Posterior cingulate gyrus (tissue), 11 donors: ENCODE measurements at regions of chr7 and their contacts with region 1.

Region 1: DNA sequence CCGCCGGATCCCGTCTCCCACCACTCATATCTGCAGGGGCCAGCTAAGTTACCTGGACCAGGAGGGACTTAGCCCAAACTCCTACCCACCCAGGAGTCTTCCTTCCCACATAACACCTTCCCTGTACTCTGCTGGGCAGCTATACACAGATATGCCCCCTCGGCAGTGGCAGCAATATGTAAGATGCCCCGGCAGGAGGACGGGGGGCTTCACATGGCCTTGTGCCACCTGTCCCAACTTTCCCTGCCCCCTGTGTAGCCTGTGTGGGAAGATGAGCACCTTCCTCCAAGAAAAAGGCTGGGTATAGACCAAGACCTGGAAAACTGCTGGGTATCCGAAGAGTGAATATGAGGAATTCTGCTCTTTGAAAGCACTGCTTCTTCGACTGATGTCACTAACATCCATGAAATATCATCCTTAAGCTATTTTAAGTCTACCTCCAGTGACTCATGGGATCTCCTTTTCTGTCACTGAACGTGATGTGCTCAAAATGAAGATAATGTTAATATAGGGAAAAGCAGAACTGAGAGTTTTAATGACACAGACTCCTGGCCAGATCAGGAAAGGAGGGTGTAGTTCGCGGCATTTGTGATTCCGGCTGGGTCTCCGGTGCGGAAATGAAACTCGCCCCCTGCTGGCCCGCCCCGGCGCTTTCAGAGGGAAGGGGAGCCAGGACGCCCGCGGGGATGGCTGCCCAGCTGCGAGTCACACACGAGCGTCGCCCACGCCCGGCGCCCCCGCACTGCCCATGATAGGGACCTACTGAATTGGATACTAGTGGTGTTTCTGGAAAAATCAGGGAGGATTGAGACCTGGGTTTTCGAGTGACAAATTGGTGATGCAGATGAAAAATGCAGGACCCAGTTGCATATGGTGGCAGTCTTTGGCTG is 256.9 kb upstream of the NFE2L3 start:
- DNase-seq: peak; percentile 38 to 93 (median 68)

Region 2: DNA sequence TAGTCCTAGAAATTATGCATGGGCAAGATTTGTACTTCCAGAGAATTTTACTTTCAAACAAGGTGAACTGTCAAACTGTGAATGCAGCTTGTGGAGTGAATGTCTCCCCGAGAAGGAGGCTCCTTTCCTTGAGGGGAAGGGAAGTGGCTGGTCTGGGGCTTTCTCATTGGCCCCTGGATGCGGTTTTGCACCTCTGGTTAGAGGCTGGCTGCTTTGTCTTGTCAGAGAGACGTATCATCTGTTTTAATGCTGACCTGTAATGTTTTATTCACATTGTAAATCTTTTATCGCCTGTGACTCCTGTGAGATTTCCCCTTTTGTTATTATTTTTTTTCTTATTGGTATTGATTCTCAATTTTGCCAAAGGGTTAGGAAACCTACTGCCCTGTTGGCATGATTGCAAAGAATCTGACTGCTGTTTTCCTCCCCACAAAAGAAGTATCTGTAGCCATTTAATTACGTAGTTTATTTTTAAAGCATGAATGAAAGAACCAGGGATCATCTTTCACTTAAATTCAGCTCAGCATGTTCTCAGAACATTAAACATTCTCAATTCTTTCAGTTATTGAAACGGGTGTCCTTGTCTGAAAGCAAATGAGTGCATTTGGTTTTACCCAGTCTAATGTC is 18.6 kb after region 1 on chr7:
- intact Hi-C with region 1: no loop called
- DNase-seq: peak in 1 of 10 donors; percentile 22

Region 3: GRCh38 chr7:26061688-26062150 is 166.6 kb after region 1 on chr7:
- intact Hi-C with region 1: loop called (anchors 5 kb)
- DNase-seq: peak in 5 of 10 donors; percentile 19 to 46 (median 23)

Region 4: GRCh38 chr7:26200444-26201246 is 305.5 kb after region 1 on chr7 and contains the start of gene HNRNPA2B1:
- intact Hi-C with region 1: loop called (anchors 5 kb)
- DNase-seq: peak; percentile 95 to 99 (median 96)

Region 5: GRCh38 chr7:26365077-26365900 is 470.1 kb after region 1 on chr7:
- intact Hi-C with region 1: loop called (anchors 1 kb)
- DNase-seq: peak in 4 of 10 donors; percentile 14 to 54 (median 36)

Region 6: GRCh38 chr7:26667500-26668133 is 772.5 kb after region 1 on chr7:
- intact Hi-C with region 1: loop called (anchors 5 kb)
- DNase-seq: peak in 7 of 10 donors; percentile 43 to 92 (median 67)

Region 7: DNA sequence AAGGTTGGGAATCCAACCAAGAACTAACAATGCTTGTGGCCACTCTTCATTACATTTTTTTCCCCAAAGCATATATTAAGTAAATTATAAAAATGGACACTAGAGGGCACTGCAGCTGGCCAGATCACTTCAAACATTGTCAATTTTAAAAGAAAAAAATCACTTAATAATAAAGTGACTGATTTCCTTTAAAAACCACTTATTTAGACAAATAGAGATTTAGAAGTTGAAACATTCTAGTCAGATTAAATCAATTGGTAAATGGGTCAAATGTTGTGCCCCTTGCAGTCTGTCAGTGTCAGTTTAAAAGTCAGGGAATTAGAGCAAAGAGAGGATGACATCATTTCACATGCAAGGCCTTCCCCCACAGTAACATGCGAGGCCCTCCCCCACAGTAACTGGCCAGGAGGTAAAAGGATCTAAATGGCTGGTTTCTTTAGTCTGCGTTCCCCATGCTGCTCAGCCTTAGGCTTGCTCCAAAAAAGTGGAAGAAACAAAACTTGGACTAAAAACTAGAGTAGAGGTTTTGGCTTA is 791.4 kb after region 1 on chr7:
- intact Hi-C with region 1: loop called (anchors 5 kb)
- DNase-seq: peak in 1 of 10 donors; percentile 34

Region 8: DNA sequence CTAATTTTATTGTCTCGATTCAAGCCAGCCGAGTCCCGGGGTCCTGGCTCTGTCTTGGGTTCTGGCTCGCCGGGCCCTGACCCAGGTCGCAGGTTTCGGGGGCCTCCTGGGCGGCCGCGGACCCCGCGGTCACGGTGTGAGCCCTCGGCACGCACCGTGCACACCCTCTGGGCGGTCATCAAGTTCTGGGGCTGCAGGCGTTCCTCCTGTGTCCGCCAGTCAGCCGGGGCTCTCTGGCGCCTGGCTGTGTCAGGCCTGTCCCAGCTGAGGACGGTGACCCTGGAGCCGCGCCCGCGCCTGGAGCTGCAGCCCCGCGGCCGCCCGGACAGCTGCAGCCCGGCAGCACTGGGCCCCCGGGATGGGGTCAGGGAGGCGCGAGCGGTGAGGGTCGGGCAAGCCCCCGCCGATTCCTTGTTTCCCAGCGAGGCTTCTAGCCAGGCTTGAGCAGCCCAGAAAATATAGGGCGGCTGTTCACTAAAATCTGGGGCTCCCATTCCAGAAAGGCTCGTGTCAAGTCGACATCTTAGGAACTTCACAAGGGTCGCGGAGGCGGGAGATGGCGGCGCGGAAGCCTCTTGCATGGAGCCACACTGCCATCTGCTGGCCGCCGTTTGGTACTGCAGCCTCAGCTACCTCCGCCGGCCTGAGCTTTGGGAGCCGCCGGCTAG is 1265.5 kb after region 1 on chr7:
- intact Hi-C with region 1: loop called (anchors 10 kb)
- DNase-seq: peak; percentile 66 to 97 (median 80)